A549 (cell line): ENCODE measurements at regions of chr5 and their contacts with region 1.

Region 1: DNA sequence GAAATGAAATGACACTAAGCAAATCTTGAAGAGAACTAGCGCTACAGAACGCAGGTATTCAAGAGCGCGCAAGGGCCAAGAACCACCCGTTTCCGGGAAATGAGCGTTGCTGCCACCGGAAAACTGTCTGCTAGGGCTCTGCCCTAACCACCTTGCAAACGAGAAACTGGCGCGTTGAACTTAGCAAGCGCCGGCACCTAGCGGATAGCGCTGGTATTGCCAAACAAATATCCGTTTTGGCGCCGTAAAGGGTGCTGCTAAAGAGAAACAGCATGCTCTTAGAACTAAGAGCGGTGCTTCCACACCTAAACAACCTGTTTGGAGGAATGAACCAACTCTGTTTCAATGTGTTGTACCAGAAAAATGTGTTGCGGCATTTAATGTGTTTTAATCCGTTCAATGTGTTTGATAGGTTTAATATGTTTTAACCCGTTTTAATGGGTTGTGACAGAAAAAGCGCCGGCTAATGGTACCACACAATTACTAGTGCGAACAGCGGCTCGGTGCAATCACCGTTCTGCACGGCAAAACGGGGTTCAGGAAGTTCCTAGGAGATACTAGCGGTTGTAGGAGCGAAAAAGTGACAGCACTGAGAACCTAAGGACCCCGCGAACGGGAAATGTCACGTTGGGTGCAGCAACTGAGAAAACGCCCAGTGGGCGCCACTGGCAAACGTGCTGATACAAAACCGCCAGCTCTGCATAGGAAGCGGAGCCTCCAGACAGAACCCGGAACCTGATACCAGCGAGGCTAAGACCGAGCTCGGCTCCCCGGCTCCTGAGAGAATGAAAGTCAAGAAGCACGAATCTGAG is at the start of gene ANXA2R:
- DNase-seq: peak; percentile 67 to 97
- ATAC-seq: peak; percentile 41 to 71
- H3K4me3 ChIP-seq: peak within 1 kb of the TSS; percentile 50
- H3K27ac ChIP-seq: peak within 1 kb of the TSS; percentile 85 to 93
- H3K4me1 ChIP-seq: peaks cover 6% of the 10 kb centered on the region; the same call in 2 of the 3 replicates
- CTCF ChIP-seq: peak; percentile 53
- EP300 ChIP-seq: no peak
- POLR2A ChIP-seq: no peak
- RAD21 ChIP-seq: peak; percentile 68 to 81
- polyA plus RNA-seq, gene ANXA2R: 1.7 and 1.8 TPM in 2 replicates

Region 2: GRCh38 chr5:42896523-42896922 is 144.0 kb before region 1 on chr5:
- CTCF ChIA-PET with region 1: no interaction called
- POLR2A ChIA-PET with region 1: no interaction called
- DNase-seq: no peak
- ATAC-seq: no peak
- H3K4me3 ChIP-seq: no peak overlapping the region
- H3K27ac ChIP-seq: no peak overlapping the region
- H3K4me1 ChIP-seq: no peaks in the 10 kb centered on the region
- CTCF ChIP-seq: no peak
- EP300 ChIP-seq: no peak
- POLR2A ChIP-seq: no peak
- RAD21 ChIP-seq: no peak

Region 3: DNA sequence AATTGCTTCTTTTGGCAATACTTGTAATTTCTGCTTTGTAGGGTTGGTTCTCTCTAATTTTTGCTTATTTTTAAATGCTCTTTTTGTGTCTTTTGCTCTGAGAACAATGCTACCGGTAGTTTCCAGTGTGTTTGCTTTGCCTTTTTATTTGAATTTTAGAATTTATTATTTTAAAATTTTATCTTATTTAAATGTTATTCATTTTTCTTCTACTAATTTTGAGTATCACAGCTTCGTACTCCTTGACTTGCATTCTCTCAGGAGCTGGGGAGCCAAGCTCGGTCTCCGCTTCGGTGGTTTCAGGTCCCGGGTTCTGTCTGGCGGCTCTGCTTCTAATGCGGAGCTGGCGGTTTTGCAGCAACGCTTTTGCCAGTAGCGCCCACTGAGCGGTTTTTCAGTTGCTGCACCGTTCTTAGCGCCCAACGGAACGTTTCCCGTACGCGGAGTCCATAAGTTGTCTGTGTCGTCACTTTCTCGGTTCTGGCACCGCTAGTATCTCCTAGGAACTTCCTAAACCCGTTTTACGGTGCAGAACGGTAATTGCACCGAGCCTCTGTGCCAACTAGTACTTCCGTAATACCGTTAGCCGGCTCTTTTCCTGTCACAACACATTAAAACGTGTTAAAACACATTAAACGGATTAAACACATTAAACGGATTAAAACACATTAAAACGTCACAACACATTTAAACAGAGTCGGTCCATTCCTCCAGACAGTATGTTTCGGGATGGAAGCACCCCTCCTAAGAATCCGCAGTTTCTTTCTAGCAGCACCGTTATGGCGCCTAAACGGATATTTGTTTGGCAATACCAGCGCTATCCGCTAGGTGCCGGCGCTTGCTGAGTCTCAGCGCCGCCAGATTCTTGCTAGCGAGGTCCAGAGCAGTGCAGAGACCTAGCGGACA is 46.0 kb before region 1 on chr5:
- CTCF ChIA-PET with region 1: interaction called, 25 read pairs
- POLR2A ChIA-PET with region 1: interaction called, 5 read pairs
- DNase-seq: peak; percentile 64 to 94
- ATAC-seq: peak; percentile 69 to 82
- H3K4me3 ChIP-seq: peak overlapping the region; percentile 64
- H3K27ac ChIP-seq: peak overlapping the region; percentile 87 to 94
- H3K4me1 ChIP-seq: peaks cover 24% of the 10 kb centered on the region
- CTCF ChIP-seq: peak; percentile 67
- EP300 ChIP-seq: no peak
- POLR2A ChIP-seq: no peak
- RAD21 ChIP-seq: peak; percentile 67 to 69

Region 4: DNA sequence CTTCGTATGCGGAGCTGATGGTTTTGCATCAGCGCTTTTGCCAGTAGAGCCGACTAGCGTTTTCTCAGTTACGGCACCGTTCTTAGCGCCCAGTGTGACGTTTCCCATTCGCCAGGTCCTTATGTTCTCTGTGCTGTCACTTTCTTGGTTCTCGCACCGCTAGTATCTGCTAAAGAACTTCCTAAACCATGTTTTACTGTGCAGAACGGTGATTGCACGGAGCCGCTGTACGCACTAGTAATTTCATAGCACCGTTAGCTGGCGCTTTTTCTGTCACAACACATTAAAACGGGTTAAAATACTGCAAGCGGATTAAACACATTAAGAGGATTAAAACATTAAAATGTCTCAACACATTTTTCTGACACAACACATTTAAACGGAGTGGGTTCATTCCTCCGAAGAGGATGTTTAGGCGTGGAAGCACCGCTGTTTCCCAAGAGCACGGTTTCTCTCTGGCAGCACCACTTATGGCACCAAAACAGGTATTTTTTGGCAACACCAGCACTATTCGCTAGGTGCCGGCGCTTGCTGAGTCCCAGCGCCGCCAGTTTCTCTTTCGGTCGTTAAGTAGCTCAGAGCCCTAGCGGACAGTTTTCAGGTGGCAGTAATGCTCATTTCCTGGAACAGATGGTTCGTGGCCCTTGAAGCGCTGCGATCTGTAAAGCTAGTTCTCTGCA is 20.7 kb before region 1 on chr5:
- CTCF ChIA-PET with region 1: interaction called, 34 read pairs
- POLR2A ChIA-PET with region 1: interaction called, 20 read pairs
- DNase-seq: peak; percentile 51 to 88
- ATAC-seq: peak; percentile 68
- H3K4me3 ChIP-seq: peak overlapping the region; percentile 55
- H3K27ac ChIP-seq: peak overlapping the region; percentile 90 to 96
- H3K4me1 ChIP-seq: peaks cover 24% of the 10 kb centered on the region
- CTCF ChIP-seq: no peak
- EP300 ChIP-seq: no peak
- POLR2A ChIP-seq: no peak
- RAD21 ChIP-seq: no peak

Region 5: GRCh38 chr5:43066799-43067741 is 26.6 kb after region 1 on chr5:
- CTCF ChIA-PET with region 1: interaction called, 52 read pairs
- POLR2A ChIA-PET with region 1: interaction called, 53 read pairs
- DNase-seq: peak; percentile 59 to 93
- ATAC-seq: peak; percentile 69 to 78
- H3K4me3 ChIP-seq: peak overlapping the region; percentile 57
- H3K27ac ChIP-seq: peak overlapping the region; percentile 92 to 93
- H3K4me1 ChIP-seq: peaks cover 23% of the 10 kb centered on the region
- CTCF ChIP-seq: no peak
- EP300 ChIP-seq: no peak
- POLR2A ChIP-seq: no peak; the same call in none of the 2 replicates
- RAD21 ChIP-seq: no peak

Region 6: GRCh38 chr5:43357067-43357466 is 316.6 kb after region 1 on chr5:
- CTCF ChIA-PET with region 1: no interaction called
- POLR2A ChIA-PET with region 1: no interaction called
- DNase-seq: no peak
- ATAC-seq: no peak
- H3K4me3 ChIP-seq: no peak overlapping the region
- H3K27ac ChIP-seq: no peak overlapping the region
- H3K4me1 ChIP-seq: no peaks in the 10 kb centered on the region
- CTCF ChIP-seq: no peak
- EP300 ChIP-seq: no peak
- POLR2A ChIP-seq: no peak
- RAD21 ChIP-seq: no peak